ENCODE measurements at regions of chr2 and their contacts with region 1.

Region 1: DNA sequence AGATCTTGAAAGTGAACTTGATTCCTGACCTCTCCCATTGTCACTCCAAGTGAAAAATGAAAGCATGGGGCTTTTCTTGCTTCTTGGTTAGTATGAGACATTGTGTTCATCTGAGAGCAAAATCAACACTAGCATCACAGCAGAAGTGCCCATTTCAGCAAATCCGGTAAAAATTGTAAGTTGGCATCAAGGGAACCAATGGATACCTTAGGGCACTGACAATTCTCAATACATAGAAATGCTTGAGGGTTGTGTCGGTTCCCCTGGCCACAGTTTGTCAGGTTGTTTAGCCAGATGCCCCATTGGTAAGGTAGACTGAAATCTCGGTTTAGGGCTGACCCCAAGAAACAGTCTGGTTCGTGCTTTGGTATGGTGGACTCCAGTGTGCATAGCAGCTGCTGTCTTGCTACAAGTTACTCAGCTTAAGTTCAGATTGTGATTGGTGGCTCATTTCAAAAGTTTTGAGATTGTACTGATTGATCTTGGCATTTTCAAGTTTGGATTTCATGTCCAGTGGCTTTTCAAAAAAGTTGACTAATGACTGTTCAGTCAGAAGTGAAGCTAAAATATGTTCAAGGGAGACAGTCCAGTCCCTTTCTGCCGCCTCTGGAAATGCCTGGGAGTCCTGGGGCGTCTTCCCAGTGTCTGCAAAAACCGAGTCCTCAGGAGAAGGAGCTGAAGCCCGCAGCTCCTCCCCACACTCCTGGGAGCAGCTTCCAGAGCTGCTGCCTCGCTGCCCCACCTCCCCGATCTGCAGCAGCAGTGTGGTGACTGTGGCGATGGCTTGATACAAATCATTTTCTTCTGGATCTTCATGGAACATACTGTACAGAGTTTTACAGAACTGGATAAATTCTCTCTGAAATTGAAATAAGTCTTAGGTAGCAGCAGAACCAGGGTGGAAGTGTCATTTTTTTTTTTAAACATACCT is 5.6 kb downstream of the RPL31 start:
- DNase-seq: no peak
- H3K4me3 ChIP-seq: no peak overlapping the region
- H3K27ac ChIP-seq: 0 out of 4 replicates have a peak overlapping the region, but pooled peaks of 1 of the 2 experiments have one; percentile 10
- H3K4me1 ChIP-seq: peaks cover 8 to 19% of the 10 kb centered on the region in 2 experiments; a peak in 3 of 4 replicates
- H3K27me3 ChIP-seq: no peaks in the 10 kb centered on the region
- CTCF ChIP-seq: no peak
- EP300 ChIP-seq: no peak
- RAD21 ChIP-seq: no peak

Region 2: GRCh38 chr2:100992262-100992661 is 15.4 kb before region 1 on chr2:
- CTCF ChIA-PET with region 1: no interaction called
- POLR2A ChIA-PET with region 1: no interaction called
- DNase-seq: no peak
- H3K4me3 ChIP-seq: no peak overlapping the region
- H3K27ac ChIP-seq: no peak overlapping the region
- H3K4me1 ChIP-seq: no peaks in the 10 kb centered on the region; a peak in 1 of 4 replicates
- H3K27me3 ChIP-seq: no peaks in the 10 kb centered on the region
- CTCF ChIP-seq: no peak
- EP300 ChIP-seq: no peak
- RAD21 ChIP-seq: no peak

Region 3: GRCh38 chr2:101188683-101189405 is 181.2 kb after region 1 on chr2:
- CTCF ChIA-PET with region 1: interaction called, 10 read pairs
- POLR2A ChIA-PET with region 1: no interaction called
- DNase-seq: peak; percentile 74
- H3K4me3 ChIP-seq: no peak overlapping the region
- H3K27ac ChIP-seq: no peak overlapping the region
- H3K4me1 ChIP-seq: peaks cover 0 to 2% of the 10 kb centered on the region in 2 experiments; a peak in 1 of 4 replicates
- H3K27me3 ChIP-seq: no peaks in the 10 kb centered on the region
- CTCF ChIP-seq: peak; percentile 70
- EP300 ChIP-seq: no peak
- RAD21 ChIP-seq: peak; percentile 67